ENCODE measurements at regions of chr2 and their contacts with region 1.

Region 1: GRCh38 chr2:224357098-224357901 is 44.6 kb downstream of the FAM124B start:
- DNase-seq: no peak
- ATAC-seq: peak; percentile 81 to 83
- H3K4me3 ChIP-seq: no peak overlapping the region
- H3K27ac ChIP-seq: no peak overlapping the region
- H3K4me1 ChIP-seq: no peaks in the 10 kb centered on the region
- H3K27me3 ChIP-seq: no peaks in the 10 kb centered on the region
- CTCF ChIP-seq: peak; percentile 82

Region 2: DNA sequence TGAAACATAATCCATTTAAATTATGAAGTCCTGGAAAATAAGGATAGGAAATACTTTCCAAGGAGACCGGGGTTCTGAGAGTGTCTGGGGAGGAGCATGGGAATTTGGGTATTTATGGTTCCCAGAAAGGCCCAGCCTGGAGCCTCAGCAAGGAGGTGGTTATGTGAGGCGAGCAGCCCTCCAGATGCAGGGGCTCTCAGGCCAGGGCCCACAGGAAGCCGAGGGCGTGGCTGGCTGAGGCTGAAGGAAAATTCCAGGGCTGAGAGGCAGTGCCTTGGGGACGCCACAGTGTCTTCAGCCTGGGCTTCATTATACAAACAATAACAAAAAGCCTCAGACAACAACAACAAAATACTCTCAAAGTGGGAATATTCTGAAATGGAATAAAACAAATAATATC is 231.3 kb before region 1 on chr2:
- intact Hi-C with region 1: no loop called
- DNase-seq: no peak
- ATAC-seq: no peak
- H3K4me3 ChIP-seq: no peak overlapping the region
- H3K27ac ChIP-seq: no peak overlapping the region
- H3K4me1 ChIP-seq: no peaks in the 10 kb centered on the region
- H3K27me3 ChIP-seq: no peaks in the 10 kb centered on the region
- CTCF ChIP-seq: no peak

Region 3: DNA sequence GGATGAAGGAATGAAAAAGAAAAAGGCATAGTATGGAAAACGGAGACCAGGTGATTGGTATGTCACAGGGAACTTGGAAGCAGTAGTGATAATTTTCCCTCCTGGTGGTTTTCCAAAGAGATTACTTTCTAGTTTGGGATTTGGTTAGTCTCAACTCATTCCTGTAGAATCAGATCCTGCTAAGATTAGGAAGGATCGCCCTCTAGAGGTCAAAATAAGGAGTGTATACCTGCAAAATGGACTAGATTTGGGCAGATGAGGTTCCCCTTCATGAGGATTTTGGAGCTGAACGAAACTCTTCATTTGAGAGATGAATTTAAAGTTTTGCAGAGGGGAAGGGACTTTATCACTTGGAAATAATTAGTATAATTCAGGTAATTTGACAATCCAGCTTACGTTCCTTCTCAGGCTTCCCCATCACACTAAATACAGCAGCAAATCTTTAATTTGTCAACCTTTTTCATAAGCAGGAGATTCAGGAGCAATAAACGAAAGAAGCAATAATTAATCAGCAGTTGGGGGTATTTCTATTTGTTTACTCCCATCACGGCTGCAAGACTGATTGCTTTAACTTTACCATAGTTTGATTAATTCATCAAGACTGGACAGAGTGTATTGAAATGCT is 293.6 kb after region 1 on chr2:
- intact Hi-C with region 1: loop called (anchors 5 kb)
- DNase-seq: no peak
- ATAC-seq: peak; percentile 66 to 83
- H3K4me3 ChIP-seq: no peak overlapping the region
- H3K27ac ChIP-seq: no peak overlapping the region
- H3K4me1 ChIP-seq: no peaks in the 10 kb centered on the region
- H3K27me3 ChIP-seq: no peaks in the 10 kb centered on the region
- CTCF ChIP-seq: peak; percentile 76

Measured in lower lobe of right lung (tissue), 2 donors.